ENCODE measurements at regions of chr10 and their contacts with region 1.

Region 1: DNA sequence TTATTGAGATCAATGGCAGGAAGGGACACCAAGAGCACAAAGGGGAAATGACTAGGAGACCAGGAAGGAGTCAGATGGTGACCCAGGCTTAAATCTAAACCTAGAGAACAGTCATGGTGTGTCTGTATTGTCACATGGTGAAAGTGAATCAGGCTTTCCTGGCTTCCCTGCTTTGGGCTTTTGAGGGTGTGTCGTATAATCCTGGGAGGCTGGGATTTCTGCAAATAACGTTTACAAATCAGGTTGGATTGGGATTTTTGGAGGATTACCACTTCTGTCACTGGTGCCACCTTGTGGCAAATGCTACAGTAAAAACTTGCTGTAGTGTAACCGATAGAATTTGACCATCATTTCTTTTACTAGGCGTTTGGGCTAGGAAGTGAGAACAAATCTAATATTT is 502.6 kb downstream of the NRG3 start:
- DNase-seq: no peak
- ATAC-seq: no peak
- H3K4me3 ChIP-seq: no peak overlapping the region
- H3K27ac ChIP-seq: no peak overlapping the region
- H3K4me1 ChIP-seq: no peaks in the 10 kb centered on the region
- H3K27me3 ChIP-seq: no peaks in the 10 kb centered on the region
- CTCF ChIP-seq: peak in 2 of 3 experiments; percentile 15 to 37; a peak in 1 of 6 replicates
- EP300 ChIP-seq: no peak
- POLR2A ChIP-seq: no peak
- RAD21 ChIP-seq: peak; percentile 19; the same call in 1 of the 2 replicates

Region 2: DNA sequence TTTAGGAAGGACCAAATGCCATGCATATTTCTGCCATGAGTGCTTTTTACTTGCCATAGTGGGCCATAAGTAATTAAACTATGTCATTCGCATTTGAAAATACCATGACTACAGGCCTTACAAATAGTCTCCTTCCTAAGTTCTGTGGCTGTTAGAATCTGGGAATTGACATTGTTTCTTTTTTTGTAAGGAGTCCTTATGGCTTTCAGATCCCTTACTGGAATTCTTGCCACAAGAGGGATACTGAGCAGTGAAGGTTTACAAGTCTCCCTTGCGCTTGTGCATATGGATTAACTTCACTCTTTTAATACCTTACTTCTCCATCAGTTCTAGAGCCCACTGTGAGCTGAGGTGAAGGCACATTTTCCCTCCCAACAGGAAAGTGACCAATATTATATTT is 336.6 kb before region 1 on chr10:
- CTCF ChIA-PET with region 1: no interaction called
- POLR2A ChIA-PET with region 1: no interaction called
- RAD21 ChIA-PET with region 1: no interaction called
- SMC1A ChIA-PET with region 1: no interaction called
- in situ Hi-C with region 1: no loop called
- intact Hi-C with region 1: no loop called
- DNase-seq: no peak
- ATAC-seq: no peak
- H3K4me3 ChIP-seq: no peak overlapping the region
- H3K27ac ChIP-seq: no peak overlapping the region
- H3K4me1 ChIP-seq: no peaks in the 10 kb centered on the region
- H3K27me3 ChIP-seq: no peaks in the 10 kb centered on the region
- CTCF ChIP-seq: no peak
- EP300 ChIP-seq: no peak
- POLR2A ChIP-seq: no peak
- RAD21 ChIP-seq: no peak

Region 3: DNA sequence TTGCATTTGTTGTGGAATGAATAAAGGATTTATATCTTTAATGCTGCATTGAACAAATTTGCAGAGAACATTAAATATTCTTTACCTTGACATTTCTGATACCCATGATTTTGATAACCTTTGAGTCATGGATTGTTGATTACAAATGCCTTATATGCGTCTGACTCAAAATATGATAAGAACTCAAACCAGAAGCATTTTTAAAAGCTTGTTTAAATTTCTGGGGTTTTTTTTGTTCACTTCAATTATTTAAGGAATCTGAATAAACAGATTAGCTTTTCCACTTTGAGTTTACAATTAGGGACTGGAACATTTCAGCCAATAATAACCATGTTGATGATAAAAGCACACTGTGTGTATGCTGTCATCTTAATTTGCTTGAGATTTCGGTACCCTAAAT is 249.1 kb before region 1 on chr10:
- CTCF ChIA-PET with region 1: no interaction called
- POLR2A ChIA-PET with region 1: no interaction called
- RAD21 ChIA-PET with region 1: no interaction called
- SMC1A ChIA-PET with region 1: no interaction called
- in situ Hi-C with region 1: no loop called
- intact Hi-C with region 1: no loop called
- DNase-seq: no peak
- ATAC-seq: no peak
- H3K4me3 ChIP-seq: no peak overlapping the region
- H3K27ac ChIP-seq: no peak overlapping the region
- H3K4me1 ChIP-seq: no peaks in the 10 kb centered on the region
- H3K27me3 ChIP-seq: no peaks in the 10 kb centered on the region
- CTCF ChIP-seq: no peak
- EP300 ChIP-seq: no peak
- POLR2A ChIP-seq: no peak
- RAD21 ChIP-seq: no peak

Region 4: GRCh38 chr10:82150120-82150900 is 227.3 kb before region 1 on chr10:
- CTCF ChIA-PET with region 1: interaction called, 5 read pairs
- POLR2A ChIA-PET with region 1: no interaction called
- RAD21 ChIA-PET with region 1: no interaction called
- SMC1A ChIA-PET with region 1: no interaction called
- in situ Hi-C with region 1: no loop called
- intact Hi-C with region 1: loop called (anchors 1 kb)
- DNase-seq: no peak
- ATAC-seq: peak; percentile 81
- H3K4me3 ChIP-seq: no peak overlapping the region
- H3K27ac ChIP-seq: no peak overlapping the region
- H3K4me1 ChIP-seq: no peaks in the 10 kb centered on the region
- H3K27me3 ChIP-seq: no peaks in the 10 kb centered on the region
- CTCF ChIP-seq: peak in 2 of 3 experiments; percentile 43 to 54; a peak in 3 of 6 replicates
- EP300 ChIP-seq: no peak
- POLR2A ChIP-seq: no peak
- RAD21 ChIP-seq: peak; percentile 47

Region 5: DNA sequence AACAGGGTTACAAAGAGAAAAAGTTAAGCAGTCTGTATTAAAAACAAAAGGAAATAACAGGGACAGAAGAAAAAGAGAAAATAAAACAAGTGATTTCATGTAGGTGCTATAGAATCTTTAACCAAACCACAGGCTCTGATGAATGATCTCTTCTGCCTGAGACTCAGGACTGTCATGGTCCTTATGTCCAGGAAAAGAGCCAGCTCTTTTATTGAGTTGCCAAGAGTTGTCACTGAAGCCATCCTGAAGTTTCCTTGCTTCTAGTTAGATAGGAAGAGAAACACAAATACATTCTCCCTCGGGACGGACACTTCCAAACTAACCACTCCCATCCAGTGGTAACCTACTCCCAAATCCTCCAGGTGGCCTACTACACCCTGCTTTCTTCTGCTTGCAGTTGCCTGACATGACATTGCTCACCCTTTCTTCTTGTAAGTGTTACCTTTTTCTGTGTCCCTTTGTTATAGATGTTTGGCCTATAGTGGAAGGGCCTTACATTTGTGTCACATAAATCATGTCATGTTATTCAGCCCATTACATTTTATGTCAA is 155.9 kb before region 1 on chr10:
- CTCF ChIA-PET with region 1: no interaction called
- POLR2A ChIA-PET with region 1: no interaction called
- RAD21 ChIA-PET with region 1: no interaction called
- SMC1A ChIA-PET with region 1: no interaction called
- in situ Hi-C with region 1: no loop called
- intact Hi-C with region 1: loop called (anchors 5 kb)
- DNase-seq: no peak
- ATAC-seq: peak; percentile 41; the same call in 2 of the 3 replicates
- H3K4me3 ChIP-seq: no peak overlapping the region
- H3K27ac ChIP-seq: no peak overlapping the region
- H3K4me1 ChIP-seq: no peaks in the 10 kb centered on the region
- H3K27me3 ChIP-seq: no peaks in the 10 kb centered on the region
- CTCF ChIP-seq: peak in 2 of 3 experiments; percentile 15 to 33; a peak in 2 of 6 replicates
- EP300 ChIP-seq: no peak
- POLR2A ChIP-seq: no peak
- RAD21 ChIP-seq: peak; percentile 47